PC-3 (cell line): ENCODE measurements at regions of chr4 and their contacts with region 1.

Region 1: GRCh38 chr4:100060765-100061416 is 110.8 kb upstream of the H2AZ1 start:
- DNase-seq: no peak
- ATAC-seq: no peak
- H3K4me3 ChIP-seq: no peak overlapping the region
- H3K27ac ChIP-seq: no peak overlapping the region
- H3K4me1 ChIP-seq: peaks cover 25% of the 10 kb centered on the region
- H3K27me3 ChIP-seq: no peaks in the 10 kb centered on the region
- CTCF ChIP-seq: no peak

Region 2: DNA sequence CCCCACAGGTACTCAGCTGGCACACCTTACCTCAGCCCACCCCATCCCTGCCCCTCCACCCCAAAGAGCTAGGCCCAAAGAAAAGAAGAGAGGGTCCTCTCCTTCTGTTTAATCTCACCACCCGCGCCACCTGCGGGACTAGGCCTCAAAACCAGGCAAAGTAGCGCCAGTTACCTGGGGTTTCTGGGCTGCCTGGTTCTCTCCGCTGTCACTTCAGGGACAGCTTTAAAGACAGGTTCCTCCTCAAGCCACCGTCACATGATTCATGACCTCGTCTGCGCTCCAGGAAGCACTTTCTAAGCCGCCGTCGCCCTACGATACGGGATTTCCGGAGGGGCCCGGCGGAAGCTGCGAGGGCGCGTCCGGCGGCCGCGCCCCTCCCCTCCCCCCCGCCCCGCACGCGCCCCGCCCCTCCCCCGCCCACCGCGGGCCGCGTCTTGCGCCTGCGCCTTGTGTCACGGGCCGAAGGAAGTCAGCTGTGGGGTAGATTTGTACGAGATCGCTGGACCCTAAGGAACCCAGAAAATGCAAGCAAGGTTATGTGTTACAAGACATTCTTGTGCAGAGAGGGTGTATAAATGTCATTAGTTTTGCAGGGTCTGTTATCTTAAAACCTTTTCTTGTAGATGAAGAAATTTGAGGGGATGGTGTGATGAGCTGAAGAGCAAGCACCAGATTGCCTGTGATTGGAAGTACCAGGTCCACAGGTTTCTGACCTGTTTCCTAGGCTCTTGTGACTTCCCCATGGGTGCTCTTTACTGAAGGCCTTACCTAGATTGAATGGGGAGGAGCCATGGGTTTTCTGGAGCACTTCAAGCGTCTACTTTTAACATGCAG is 166.5 kb before region 1 on chr4 and contains the start of gene LAMTOR3:
- CTCF ChIA-PET with region 1: no interaction called
- POLR2A ChIA-PET with region 1: no interaction called
- intact Hi-C with region 1: no loop called
- DNase-seq: peak; percentile 85
- ATAC-seq: peak; percentile 99
- H3K4me3 ChIP-seq: peak within 1 kb of the TSS; percentile 84
- H3K27ac ChIP-seq: no peak within 1 kb of the TSS; the same call in 1 of the 2 replicates
- H3K4me1 ChIP-seq: 0 out of 2 replicates have a peak, but pooled peaks cover 4% of the 10 kb centered on the region
- H3K27me3 ChIP-seq: no peaks in the 10 kb centered on the region
- CTCF ChIP-seq: no peak
- total RNA-seq, gene LAMTOR3: 13.5 and 14.0 TPM in 2 replicates

Region 3: DNA sequence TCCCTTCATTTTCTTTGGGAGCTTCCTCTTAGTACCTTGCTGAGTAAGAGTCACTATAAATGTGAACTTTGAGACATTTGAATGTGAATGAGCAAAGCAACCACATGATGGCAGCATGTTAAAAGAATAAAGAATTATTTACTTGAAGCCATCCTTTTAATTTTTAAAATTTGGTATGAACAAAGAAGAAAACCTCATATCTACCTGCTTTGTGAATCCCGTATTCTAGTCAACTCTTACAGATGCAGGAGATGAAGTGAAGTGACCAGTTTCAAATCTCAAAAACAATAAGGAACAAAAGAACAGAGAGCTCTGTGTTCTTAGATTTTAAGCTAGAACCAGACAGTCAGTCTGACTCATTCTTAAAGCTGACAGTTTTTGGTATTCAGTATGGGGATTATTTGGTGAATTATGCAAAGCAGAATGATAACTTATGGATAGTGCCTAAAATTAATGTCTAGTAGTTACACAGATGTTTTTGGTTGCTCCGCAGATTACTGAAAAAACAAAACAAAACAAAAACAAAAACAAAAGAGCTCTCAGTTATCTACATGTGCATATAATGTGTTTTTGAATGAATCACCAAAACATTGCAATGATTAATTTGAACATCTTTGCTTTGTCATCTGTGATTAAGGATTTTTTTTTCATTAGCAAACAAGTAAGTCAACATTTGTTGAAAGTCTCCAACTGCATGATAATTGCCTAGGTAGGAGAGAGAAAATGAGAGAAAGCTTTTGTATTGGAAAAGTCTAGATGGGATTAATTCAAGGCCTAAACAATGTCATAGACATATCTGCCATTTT is 62.6 kb before region 1 on chr4:
- CTCF ChIA-PET with region 1: interaction called, 10 read pairs
- POLR2A ChIA-PET with region 1: no interaction called
- intact Hi-C with region 1: loop called (anchors 5 kb)
- DNase-seq: peak; percentile 59
- ATAC-seq: peak; percentile 80
- H3K4me3 ChIP-seq: peak overlapping the region; percentile 20; the same call in 1 of the 2 replicates
- H3K27ac ChIP-seq: peak overlapping the region; percentile 57
- H3K4me1 ChIP-seq: peaks cover 22% of the 10 kb centered on the region
- H3K27me3 ChIP-seq: no peaks in the 10 kb centered on the region
- CTCF ChIP-seq: peak; percentile 74

Region 4: DNA sequence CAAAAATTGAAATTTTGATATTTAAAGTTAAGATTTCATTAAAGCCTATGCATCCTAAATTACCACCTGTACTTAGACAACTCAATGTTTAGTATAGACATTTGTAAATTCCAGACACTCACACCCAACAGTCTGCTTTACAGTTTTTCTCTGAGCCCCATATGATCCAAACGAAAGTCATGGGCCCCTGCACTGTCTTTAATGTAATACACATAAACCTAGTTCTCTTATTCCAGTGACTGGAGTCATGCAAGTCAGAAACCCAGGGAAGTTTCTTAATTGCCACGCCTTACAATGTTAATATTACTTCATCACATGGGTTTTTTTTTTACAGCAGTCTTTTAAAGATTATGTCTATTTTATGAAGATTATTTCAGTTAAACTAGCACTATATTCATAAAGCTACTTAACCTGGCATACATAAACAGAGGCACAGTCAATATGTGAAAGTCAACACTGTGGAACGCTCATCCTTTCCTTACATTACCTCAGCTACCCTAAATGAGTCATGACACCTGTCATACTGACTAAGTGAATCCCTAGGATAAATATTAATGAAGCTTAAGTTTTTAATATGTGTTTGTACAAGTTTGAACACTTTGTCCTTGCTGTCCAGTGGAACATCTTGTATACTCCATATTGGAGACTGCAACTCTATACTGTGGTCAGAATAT is 43.1 kb before region 1 on chr4:
- CTCF ChIA-PET with region 1: no interaction called
- POLR2A ChIA-PET with region 1: no interaction called
- intact Hi-C with region 1: loop called (anchors 5 kb)
- DNase-seq: peak; percentile 83
- ATAC-seq: peak; percentile 93
- H3K4me3 ChIP-seq: peak overlapping the region; percentile 39; the same call in 1 of the 2 replicates
- H3K27ac ChIP-seq: peak overlapping the region; percentile 71
- H3K4me1 ChIP-seq: peaks cover 35% of the 10 kb centered on the region
- H3K27me3 ChIP-seq: no peaks in the 10 kb centered on the region
- CTCF ChIP-seq: no peak